GM12878 (cell line): ENCODE measurements at regions of chr18 and their contacts with region 1.

Region 1: GRCh38 chr18:3177902-3178687 is 41.7 kb downstream of the MYOM1 start:
- DNase-seq: peak; percentile 98
- ATAC-seq: peak; percentile 91
- H3K4me3 ChIP-seq: 0 out of 2 replicates have a peak overlapping the region, but pooled peaks have one; percentile 6
- H3K27ac ChIP-seq: peak overlapping the region; percentile 97
- H3K4me1 ChIP-seq: peaks cover 50% of the 10 kb centered on the region
- H3K27me3 ChIP-seq: no peaks in the 10 kb centered on the region
- CTCF ChIP-seq: no peak
- EP300 ChIP-seq: peak; percentile 100
- POLR2A ChIP-seq: peak; percentile 78
- RAD21 ChIP-seq: no peak

Region 2: GRCh38 chr18:2985628-2986027 is 192.5 kb before region 1 on chr18:
- CTCF ChIA-PET with region 1: interaction called, 9 read pairs
- POLR2A ChIA-PET with region 1: interaction called, 4 read pairs
- RAD21 ChIA-PET with region 1: interaction called, 7 read pairs
- SMC1A ChIA-PET with region 1: interaction called, 10 read pairs
- in situ Hi-C with region 1: no loop called
- intact Hi-C with region 1: no loop called
- DNase-seq: no peak
- ATAC-seq: peak; percentile 67
- H3K4me3 ChIP-seq: no peak overlapping the region
- H3K27ac ChIP-seq: no peak overlapping the region
- H3K4me1 ChIP-seq: peaks cover 21% of the 10 kb centered on the region
- H3K27me3 ChIP-seq: no peaks in the 10 kb centered on the region
- CTCF ChIP-seq: peak; percentile 56 to 71 (median 62)
- EP300 ChIP-seq: no peak
- POLR2A ChIP-seq: no peak
- RAD21 ChIP-seq: peak; percentile 81

Region 3: DNA sequence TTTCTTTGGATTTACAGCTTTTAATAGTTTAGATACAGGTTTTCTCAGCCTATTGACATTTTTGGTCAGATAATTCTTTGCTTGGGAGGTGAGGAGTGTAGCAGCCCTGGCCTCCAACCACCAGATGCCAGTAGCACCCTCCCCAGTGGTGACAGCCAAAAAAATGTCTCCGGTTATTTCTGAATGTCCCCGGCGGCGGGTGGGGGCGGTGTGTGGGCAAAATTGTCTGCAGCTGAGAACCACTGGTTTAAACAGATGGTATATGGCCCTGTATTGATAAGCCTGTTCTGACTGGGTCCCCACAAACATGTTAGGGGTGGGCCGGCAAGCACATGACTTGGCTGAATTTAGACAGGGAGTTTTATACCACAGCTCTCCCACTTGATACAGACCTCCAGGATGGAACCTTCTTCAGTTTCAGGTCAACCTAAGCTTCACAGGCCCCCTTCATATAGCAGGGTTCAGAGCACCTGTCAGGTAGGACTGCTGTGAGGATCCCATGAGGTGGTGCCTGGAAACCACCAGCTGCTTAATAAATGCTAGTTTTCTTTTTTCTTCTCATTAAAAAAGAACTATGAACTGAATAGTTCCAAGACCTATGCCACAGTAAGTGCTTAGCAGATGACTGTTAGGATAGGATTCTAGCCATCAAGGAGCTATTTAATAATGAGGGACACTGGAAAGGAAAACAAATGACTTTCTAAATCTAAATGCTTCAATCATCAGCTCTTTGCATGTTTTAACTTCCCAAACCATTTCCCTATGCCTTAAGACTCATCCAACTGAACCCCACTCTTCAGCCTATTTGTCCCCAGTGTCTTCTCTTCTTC is 183.3 kb before region 1 on chr18:
- CTCF ChIA-PET with region 1: interaction called, 13 read pairs
- POLR2A ChIA-PET with region 1: interaction called, 4 read pairs
- RAD21 ChIA-PET with region 1: no interaction called
- SMC1A ChIA-PET with region 1: interaction called, 5 read pairs
- in situ Hi-C with region 1: no loop called
- intact Hi-C with region 1: no loop called
- DNase-seq: no peak
- ATAC-seq: peak; percentile 93
- H3K4me3 ChIP-seq: no peak overlapping the region
- H3K27ac ChIP-seq: peak overlapping the region; percentile 53; the same call in 1 of the 2 replicates
- H3K4me1 ChIP-seq: peaks cover 33% of the 10 kb centered on the region
- H3K27me3 ChIP-seq: no peaks in the 10 kb centered on the region
- CTCF ChIP-seq: peak; percentile 69 to 71 (median 70)
- EP300 ChIP-seq: no peak
- POLR2A ChIP-seq: no peak
- RAD21 ChIP-seq: peak; percentile 84

Region 4: DNA sequence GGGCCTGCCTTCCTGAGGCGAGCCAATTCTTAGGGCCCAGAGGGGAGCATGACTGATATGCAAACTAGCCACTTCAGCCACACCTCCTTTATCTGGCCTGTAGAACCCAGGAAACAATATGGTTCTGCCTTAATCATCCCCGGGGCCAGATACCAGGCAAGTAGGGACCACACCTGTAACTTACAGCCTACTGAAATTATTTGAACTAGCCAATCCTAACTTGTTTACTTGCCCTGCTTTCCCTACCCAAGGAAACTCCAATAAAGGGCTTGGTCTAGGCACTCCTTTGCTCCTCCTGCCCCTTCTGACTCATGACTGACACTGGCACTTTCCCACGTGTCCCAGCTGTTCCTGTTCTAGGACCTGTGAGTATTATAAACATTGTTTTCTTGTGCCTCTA is 15.9 kb before region 1 on chr18:
- CTCF ChIA-PET with region 1: interaction called, 4 read pairs
- POLR2A ChIA-PET with region 1: no interaction called
- RAD21 ChIA-PET with region 1: interaction called, 6 read pairs
- SMC1A ChIA-PET with region 1: interaction called, 12 read pairs
- in situ Hi-C with region 1: no loop called
- intact Hi-C with region 1: no loop called
- DNase-seq: no peak
- ATAC-seq: peak; percentile 44; the same call in 1 of the 3 replicates
- H3K4me3 ChIP-seq: no peak overlapping the region
- H3K27ac ChIP-seq: no peak overlapping the region
- H3K4me1 ChIP-seq: no peaks in the 10 kb centered on the region
- H3K27me3 ChIP-seq: no peaks in the 10 kb centered on the region
- CTCF ChIP-seq: no peak
- EP300 ChIP-seq: no peak
- POLR2A ChIP-seq: no peak
- RAD21 ChIP-seq: no peak

Region 5: DNA sequence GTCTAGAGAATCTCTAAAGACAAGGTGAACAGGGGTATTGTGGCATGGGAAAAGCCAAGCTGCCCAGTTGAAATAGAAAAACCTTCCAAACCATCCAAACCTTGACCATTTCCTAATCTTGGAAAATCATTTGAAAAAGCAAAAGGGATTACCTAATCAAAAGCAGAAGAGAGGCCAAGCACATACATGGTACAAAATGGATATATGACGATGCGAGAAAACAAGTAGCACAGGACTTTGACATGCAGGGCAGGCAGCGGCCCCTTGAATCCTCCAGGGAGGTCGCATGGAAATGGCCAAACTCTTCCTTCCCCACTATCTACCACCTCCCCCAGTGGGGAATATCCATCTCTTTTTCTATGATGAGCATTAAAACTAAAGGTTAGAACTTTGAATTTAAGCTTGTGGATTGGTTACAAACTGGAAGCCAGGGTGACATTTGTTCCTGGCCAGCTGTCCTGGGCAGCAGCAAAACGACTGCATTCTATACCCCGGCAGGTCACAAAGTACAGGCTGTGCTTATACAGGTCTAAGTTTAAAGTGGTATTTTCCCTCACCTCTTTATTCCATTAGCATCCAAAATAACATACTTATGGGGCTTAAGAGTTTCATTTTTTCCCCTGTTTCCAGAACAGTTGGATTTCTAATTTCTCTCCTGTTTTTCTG is 17.0 kb after region 1 on chr18:
- CTCF ChIA-PET with region 1: interaction called, 20 read pairs
- POLR2A ChIA-PET with region 1: no interaction called
- RAD21 ChIA-PET with region 1: interaction called, 7 read pairs
- SMC1A ChIA-PET with region 1: interaction called, 8 read pairs
- in situ Hi-C with region 1: no loop called
- intact Hi-C with region 1: no loop called
- DNase-seq: no peak
- ATAC-seq: no peak
- H3K4me3 ChIP-seq: no peak overlapping the region
- H3K27ac ChIP-seq: no peak overlapping the region
- H3K4me1 ChIP-seq: no peaks in the 10 kb centered on the region
- H3K27me3 ChIP-seq: no peaks in the 10 kb centered on the region
- CTCF ChIP-seq: no peak
- EP300 ChIP-seq: no peak
- POLR2A ChIP-seq: no peak
- RAD21 ChIP-seq: no peak

Region 6: GRCh38 chr18:3209859-3210569 is 31.9 kb after region 1 on chr18:
- CTCF ChIA-PET with region 1: interaction called, 5 read pairs
- POLR2A ChIA-PET with region 1: interaction called, 7 read pairs
- RAD21 ChIA-PET with region 1: interaction called, 4 read pairs
- SMC1A ChIA-PET with region 1: interaction called, 15 read pairs
- in situ Hi-C with region 1: no loop called
- intact Hi-C with region 1: no loop called
- DNase-seq: peak; percentile 20
- ATAC-seq: peak; percentile 97
- H3K4me3 ChIP-seq: no peak overlapping the region
- H3K27ac ChIP-seq: no peak overlapping the region
- H3K4me1 ChIP-seq: no peaks in the 10 kb centered on the region
- H3K27me3 ChIP-seq: no peaks in the 10 kb centered on the region
- CTCF ChIP-seq: no peak
- EP300 ChIP-seq: peak in 1 of 2 experiments; percentile 59; a peak in 1 of 4 replicates
- POLR2A ChIP-seq: no peak
- RAD21 ChIP-seq: no peak

Region 7: GRCh38 chr18:3604498-3605408 is 426.7 kb after region 1 on chr18:
- CTCF ChIA-PET with region 1: no interaction called
- POLR2A ChIA-PET with region 1: no interaction called
- RAD21 ChIA-PET with region 1: interaction called, 3 read pairs
- SMC1A ChIA-PET with region 1: no interaction called
- in situ Hi-C with region 1: no loop called
- intact Hi-C with region 1: loop called (anchors 10 kb)
- DNase-seq: peak; percentile 80
- ATAC-seq: peak; percentile 90
- H3K4me3 ChIP-seq: peak overlapping the region; percentile 57
- H3K27ac ChIP-seq: peak overlapping the region; percentile 80
- H3K4me1 ChIP-seq: peaks cover 25% of the 10 kb centered on the region
- H3K27me3 ChIP-seq: no peaks in the 10 kb centered on the region
- CTCF ChIP-seq: no peak
- EP300 ChIP-seq: peak; percentile 49 to 57; a peak in 2 of 4 replicates
- POLR2A ChIP-seq: 0 out of 2 replicates have a peak, but pooled peaks have one; percentile 32
- RAD21 ChIP-seq: no peak